CD8-positive, alpha-beta T cell (primary cell): ENCODE measurements at regions of chr9 and their contacts with region 1.

Region 1: GRCh38 chr9:92764988-92765936 is 629 bp upstream of the BICD2 start:
- DNase-seq: peak; percentile 96 to 99 (median 97)
- ATAC-seq: peak; percentile 89
- H3K4me3 ChIP-seq: peak overlapping the region; percentile 68 to 94
- H3K4me3 Mint-ChIP-seq: peak overlapping the region; percentile 91
- H3K27ac ChIP-seq: peak overlapping the region; percentile 98 to 99
- H3K27ac Mint-ChIP-seq: peak overlapping the region; percentile 98
- H3K4me1 ChIP-seq: peaks cover 37% of the 10 kb centered on the region
- H3K4me1 Mint-ChIP-seq: peaks cover 55% of the 10 kb centered on the region
- H3K27me3 ChIP-seq: no peaks in the 10 kb centered on the region
- H3K27me3 Mint-ChIP-seq: no peaks in the 10 kb centered on the region
- CTCF ChIP-seq: peak; percentile 91

Region 2: GRCh38 chr9:92115071-92115858 is 650.0 kb before region 1 on chr9 and contains the start of gene SPTLC1:
- CTCF ChIA-PET with region 1: no interaction called
- POLR2A ChIA-PET with region 1: no interaction called
- intact Hi-C with region 1: loop called in 1 of 2 experiments (anchors 1 kb)
- DNase-seq: peak; percentile 90 to 97 (median 94)
- ATAC-seq: peak; percentile 98
- H3K4me3 ChIP-seq: peak within 1 kb of the TSS; percentile 64 to 88
- H3K4me3 Mint-ChIP-seq: peak within 1 kb of the TSS; percentile 100
- H3K27ac ChIP-seq: peak within 1 kb of the TSS; percentile 89 to 91
- H3K27ac Mint-ChIP-seq: peak within 1 kb of the TSS; percentile 99
- H3K4me1 ChIP-seq: peaks cover 14% of the 10 kb centered on the region
- H3K4me1 Mint-ChIP-seq: peaks cover 41% of the 10 kb centered on the region
- H3K27me3 ChIP-seq: no peaks in the 10 kb centered on the region
- H3K27me3 Mint-ChIP-seq: no peaks in the 10 kb centered on the region
- CTCF ChIP-seq: no peak
- total RNA-seq, gene SPTLC1: 41.4 to 41.9 TPM

Region 3: DNA sequence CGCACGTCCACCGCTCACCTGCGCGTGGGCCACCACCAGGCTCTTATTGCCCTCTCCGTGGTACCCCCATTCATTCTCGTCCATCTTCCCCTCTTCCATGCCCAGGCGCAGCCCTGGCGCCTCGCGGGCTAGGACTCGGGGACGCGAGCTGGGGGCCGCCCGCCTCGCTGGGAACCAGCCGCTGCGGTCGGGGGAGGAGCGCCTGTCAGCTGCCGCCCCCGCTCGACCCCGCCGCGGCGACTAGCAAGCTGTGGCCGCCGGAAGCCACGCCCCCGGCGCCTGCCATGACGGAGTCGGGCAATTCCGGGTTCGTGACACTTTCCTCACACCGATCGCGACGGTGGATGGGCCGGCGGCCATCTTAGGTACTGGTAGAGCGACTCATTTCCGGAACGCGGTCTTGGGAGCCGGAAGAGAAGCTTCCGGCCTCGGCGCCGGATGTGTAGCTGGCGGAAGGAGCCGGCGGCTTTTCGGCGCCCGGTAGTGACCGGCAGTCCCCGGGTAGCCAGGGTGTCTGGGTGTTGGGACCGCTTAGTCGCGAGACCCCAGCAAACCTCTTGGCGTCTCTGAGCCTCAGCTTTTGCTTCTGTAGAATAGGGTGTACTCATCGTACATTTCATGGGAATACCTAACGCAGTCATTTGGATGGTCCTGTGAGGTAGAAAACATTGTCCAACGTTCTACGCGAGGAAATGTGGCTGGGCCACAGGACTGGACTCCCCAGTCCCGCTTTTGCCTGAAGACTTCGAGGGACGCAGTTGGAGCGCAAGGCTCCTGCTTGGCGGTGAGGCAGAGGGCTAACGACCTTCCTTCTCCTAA is 95.2 kb before region 1 on chr9 and contains the start of gene IPPK:
- CTCF ChIA-PET with region 1: no interaction called
- POLR2A ChIA-PET with region 1: interaction called, 14 read pairs
- intact Hi-C with region 1: loop called (anchors 1 kb)
- DNase-seq: peak; percentile 93 to 99 (median 96)
- ATAC-seq: peak; percentile 93
- H3K4me3 ChIP-seq: peak within 1 kb of the TSS; percentile 87 to 98
- H3K4me3 Mint-ChIP-seq: peak within 1 kb of the TSS; percentile 96
- H3K27ac ChIP-seq: peak within 1 kb of the TSS; percentile 96
- H3K27ac Mint-ChIP-seq: peak within 1 kb of the TSS; percentile 98
- H3K4me1 ChIP-seq: peaks cover 23% of the 10 kb centered on the region
- H3K4me1 Mint-ChIP-seq: peaks cover 39% of the 10 kb centered on the region
- H3K27me3 ChIP-seq: no peaks in the 10 kb centered on the region
- H3K27me3 Mint-ChIP-seq: no peaks in the 10 kb centered on the region
- CTCF ChIP-seq: no peak
- total RNA-seq, gene IPPK: 12.2 to 12.8 TPM

Region 4: GRCh38 chr9:92790542-92791527 is 25.6 kb after region 1 on chr9:
- CTCF ChIA-PET with region 1: interaction called, 10 read pairs
- POLR2A ChIA-PET with region 1: interaction called, 4 read pairs
- intact Hi-C with region 1: loop called (anchors 1 kb)
- DNase-seq: peak; percentile 60 to 85 (median 79)
- ATAC-seq: peak; percentile 98
- H3K4me3 ChIP-seq: no peak overlapping the region
- H3K4me3 Mint-ChIP-seq: no peak overlapping the region
- H3K27ac ChIP-seq: no peak overlapping the region
- H3K27ac Mint-ChIP-seq: no peak overlapping the region
- H3K4me1 ChIP-seq: no peaks in the 10 kb centered on the region
- H3K4me1 Mint-ChIP-seq: peaks cover 4% of the 10 kb centered on the region
- H3K27me3 ChIP-seq: no peaks in the 10 kb centered on the region
- H3K27me3 Mint-ChIP-seq: peaks cover 3% of the 10 kb centered on the region
- CTCF ChIP-seq: peak; percentile 78

Region 5: GRCh38 chr9:92963831-92964626 is 198.8 kb after region 1 on chr9:
- CTCF ChIA-PET with region 1: no interaction called
- POLR2A ChIA-PET with region 1: interaction called, 8 read pairs
- intact Hi-C with region 1: loop called (anchors 5 to 10 kb)
- DNase-seq: peak; percentile 64 to 94 (median 82)
- ATAC-seq: peak; percentile 74
- H3K4me3 ChIP-seq: peak overlapping the region; percentile 59 to 81
- H3K4me3 Mint-ChIP-seq: peak overlapping the region; percentile 91
- H3K27ac ChIP-seq: peak overlapping the region; percentile 91 to 94
- H3K27ac Mint-ChIP-seq: peak overlapping the region; percentile 100
- H3K4me1 ChIP-seq: peaks cover 62% of the 10 kb centered on the region
- H3K4me1 Mint-ChIP-seq: peaks cover 60% of the 10 kb centered on the region
- H3K27me3 ChIP-seq: no peaks in the 10 kb centered on the region
- H3K27me3 Mint-ChIP-seq: no peaks in the 10 kb centered on the region
- CTCF ChIP-seq: no peak

Region 6: DNA sequence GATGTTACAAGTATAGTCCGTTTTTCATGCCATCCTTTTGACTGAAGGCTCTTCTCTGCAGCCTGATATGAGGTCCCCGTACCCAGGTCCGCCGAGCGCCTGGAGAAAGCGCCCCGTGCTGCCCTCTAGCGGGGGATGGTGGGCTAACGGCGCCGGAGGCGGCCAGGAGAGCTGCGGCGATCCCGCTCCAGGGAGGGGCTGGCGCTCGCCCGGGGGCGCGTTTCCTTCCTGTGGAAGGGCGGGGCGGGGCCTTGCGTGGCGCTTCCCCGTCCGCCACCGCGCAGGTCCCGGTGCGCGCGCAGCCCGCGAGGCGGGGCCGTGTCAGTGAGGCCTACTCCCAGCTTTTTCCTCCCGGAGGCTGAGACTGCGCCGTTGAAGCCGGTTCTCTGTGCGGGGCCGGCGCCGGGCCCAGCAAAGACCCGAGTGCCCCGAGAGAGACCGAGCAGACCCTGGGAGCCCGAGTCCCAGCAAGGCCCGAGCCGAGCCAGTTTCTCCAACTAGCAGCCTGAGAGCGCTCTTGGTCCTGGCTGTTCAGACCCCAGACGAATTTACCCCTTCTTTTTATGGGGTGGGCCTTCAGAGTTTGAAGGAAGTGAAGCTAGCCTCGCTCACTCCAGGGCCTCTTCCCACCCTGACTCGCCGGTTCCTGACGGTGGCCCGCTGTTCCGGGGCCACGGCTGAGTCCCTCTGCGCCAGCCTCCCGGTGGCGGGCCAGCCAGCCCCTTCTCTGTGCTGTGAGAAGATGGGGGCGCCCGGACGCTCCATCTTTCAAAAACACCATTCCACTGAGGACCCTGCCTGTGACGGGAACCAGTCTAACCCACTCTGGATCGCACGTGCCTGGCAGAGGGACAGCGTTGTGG is 801.4 kb after region 1 on chr9:
- CTCF ChIA-PET with region 1: no interaction called
- POLR2A ChIA-PET with region 1: no interaction called
- intact Hi-C with region 1: loop called (anchors 2 to 10 kb)
- DNase-seq: peak; percentile 97 to 100 (median 99)
- ATAC-seq: peak; percentile 97
- H3K4me3 ChIP-seq: peak overlapping the region; percentile 65 to 72
- H3K4me3 Mint-ChIP-seq: peak overlapping the region; percentile 84
- H3K27ac ChIP-seq: peak overlapping the region; percentile 79 to 94
- H3K27ac Mint-ChIP-seq: peak overlapping the region; percentile 98
- H3K4me1 ChIP-seq: peaks cover 15% of the 10 kb centered on the region
- H3K4me1 Mint-ChIP-seq: peaks cover 18% of the 10 kb centered on the region
- H3K27me3 ChIP-seq: no peaks in the 10 kb centered on the region
- H3K27me3 Mint-ChIP-seq: no peaks in the 10 kb centered on the region
- CTCF ChIP-seq: peak; percentile 95